Naive thymus-derived CD4-positive, alpha-beta T cell (primary cell): ENCODE measurements at regions of chr18 and their contacts with region 1.

Region 1: GRCh38 chr18:9102508-9103375 is at the start of gene NDUFV2:
- DNase-seq: peak; percentile 93 to 99 (median 97)
- ATAC-seq: peak; percentile 97
- H3K4me3 ChIP-seq: peak within 1 kb of the TSS; percentile 81
- H3K4me3 Mint-ChIP-seq: peak within 1 kb of the TSS; percentile 79 to 98 (median 96)
- H3K27ac ChIP-seq: peak within 1 kb of the TSS; percentile 82
- H3K27ac Mint-ChIP-seq: peak within 1 kb of the TSS; percentile 90 to 98 (median 95)
- H3K4me1 ChIP-seq: peaks cover 40 to 48% of the 10 kb centered on the region in 2 donors
- H3K4me1 Mint-ChIP-seq: peaks cover 46 to 61% (median 57%) of the 10 kb centered on the region in 7 donors
- H3K27me3 ChIP-seq: no peaks in the 10 kb centered on the region
- H3K27me3 Mint-ChIP-seq: no peaks in the 10 kb centered on the region
- total RNA-seq, gene NDUFV2: 127 to 198 (median 171) TPM

Region 2: DNA sequence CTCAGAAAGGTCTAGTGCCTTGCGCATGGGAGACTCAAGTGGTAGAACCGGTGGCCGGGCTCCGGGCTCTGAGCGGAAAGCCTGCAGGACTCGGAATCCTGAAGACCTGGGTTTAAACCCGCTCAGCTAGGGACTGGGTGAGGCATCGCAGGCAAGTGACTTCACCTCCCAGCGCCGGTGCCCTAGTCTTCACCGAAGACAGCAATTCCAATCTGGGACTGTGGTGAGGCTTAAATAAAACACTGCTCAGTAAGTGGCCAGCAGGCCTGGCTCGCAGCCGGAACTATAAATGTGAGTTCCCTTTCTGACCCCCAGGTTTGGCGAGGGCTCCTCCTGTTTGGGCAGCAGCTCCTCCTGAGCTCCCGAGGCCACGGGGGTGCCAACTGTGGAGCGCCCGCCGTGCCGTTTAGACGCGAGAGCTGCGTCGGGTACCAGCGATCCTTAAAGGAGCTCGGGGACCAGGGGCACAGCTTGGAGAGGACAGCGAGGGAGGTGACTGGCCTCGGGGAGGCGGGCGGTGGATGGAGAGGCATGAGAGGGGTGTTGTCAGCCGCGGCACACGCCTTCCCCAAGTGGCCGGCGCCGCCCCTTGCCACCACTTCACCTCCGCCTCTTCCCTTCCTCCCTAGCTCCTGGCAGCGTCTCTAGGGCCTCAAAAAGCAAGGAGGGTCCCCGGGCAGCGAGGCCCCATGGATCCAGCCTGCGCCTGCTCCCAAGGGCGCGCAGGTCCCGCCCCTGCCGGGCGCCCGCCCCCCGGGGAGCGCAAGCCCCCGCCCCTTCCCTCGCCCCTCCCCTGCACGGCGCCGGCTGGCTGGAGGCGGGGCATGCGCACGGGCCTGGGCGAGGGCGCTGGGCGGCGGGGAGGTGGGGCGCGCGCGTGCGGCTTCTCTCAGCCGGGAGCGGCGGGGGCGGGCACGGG is 398.1 kb before region 1 on chr18:
- CTCF ChIA-PET with region 1: no interaction called
- POLR2A ChIA-PET with region 1: no interaction called
- intact Hi-C with region 1: loop called in 1 of 2 experiments (anchors 2 kb)
- DNase-seq: peak; percentile 65 to 92 (median 75)
- ATAC-seq: peak; percentile 96
- H3K4me3 ChIP-seq: peak overlapping the region; percentile 75
- H3K4me3 Mint-ChIP-seq: peak overlapping the region; percentile 83 to 96 (median 90)
- H3K27ac ChIP-seq: peak overlapping the region; percentile 25
- H3K27ac Mint-ChIP-seq: peak overlapping the region in 4 of 9 donors; percentile 4 to 67 (median 48)
- H3K4me1 ChIP-seq: peaks cover 6 to 21% of the 10 kb centered on the region in 2 donors
- H3K4me1 Mint-ChIP-seq: peaks cover 13 to 29% (median 17%) of the 10 kb centered on the region in 7 donors
- H3K27me3 ChIP-seq: peaks cover 5 to 19% of the 10 kb centered on the region in 2 donors
- H3K27me3 Mint-ChIP-seq: peaks cover 60 to 78% (median 68%) of the 10 kb centered on the region in 5 donors

Region 3: DNA sequence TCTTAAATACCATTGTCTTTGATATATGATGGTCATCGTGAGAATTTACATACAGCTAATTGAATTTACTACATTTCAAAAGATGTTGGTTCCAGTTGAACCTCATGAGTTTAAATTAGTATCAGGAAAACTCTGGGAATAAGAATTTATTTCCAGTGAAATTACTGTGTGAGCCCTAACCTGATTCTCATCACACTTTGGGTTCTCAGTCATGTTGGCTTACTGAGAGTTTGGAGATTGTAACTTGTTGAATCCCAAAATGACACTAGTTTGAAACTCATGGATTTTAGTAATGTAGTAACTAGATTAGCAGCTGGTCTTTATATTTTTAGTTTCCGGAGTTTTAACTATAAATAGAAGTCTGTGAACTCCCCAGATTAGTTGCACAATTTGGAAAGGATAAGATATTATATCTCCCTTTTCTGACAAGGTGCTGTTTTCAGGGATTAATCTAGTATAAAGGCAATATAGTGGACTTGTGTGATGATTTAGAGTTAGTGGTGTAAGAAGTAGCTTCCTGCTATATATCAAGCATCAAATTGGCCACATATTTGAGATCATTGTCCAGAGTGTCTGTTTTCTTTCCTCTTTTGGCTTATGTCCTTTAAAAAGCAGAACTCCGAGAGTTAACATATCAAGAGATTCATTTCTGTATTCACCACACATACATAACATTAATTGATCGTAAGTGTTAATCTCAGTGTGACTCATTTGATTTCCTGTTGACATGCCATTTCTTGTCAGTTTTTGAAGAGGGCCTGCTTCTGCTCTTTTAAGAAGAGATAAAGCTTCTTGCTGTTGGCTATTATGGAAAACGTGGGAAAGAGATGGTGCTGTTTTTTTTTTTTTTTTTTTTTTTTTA is 15.5 kb after region 1 on chr18:
- CTCF ChIA-PET with region 1: interaction called, 27 read pairs
- POLR2A ChIA-PET with region 1: interaction called, 160 read pairs
- intact Hi-C with region 1: loop called (anchors 1 kb)
- DNase-seq: peak in 7 of 9 donors; percentile 28 to 66 (median 43)
- ATAC-seq: peak; percentile 72
- H3K4me3 ChIP-seq: peak overlapping the region; percentile 32
- H3K4me3 Mint-ChIP-seq: peak overlapping the region; percentile 56 to 97 (median 82)
- H3K27ac ChIP-seq: peak overlapping the region; percentile 77
- H3K27ac Mint-ChIP-seq: peak overlapping the region; percentile 92 to 98 (median 96)
- H3K4me1 ChIP-seq: peaks cover 52 to 70% of the 10 kb centered on the region in 2 donors
- H3K4me1 Mint-ChIP-seq: peaks cover 51 to 95% (median 87%) of the 10 kb centered on the region in 7 donors
- H3K27me3 ChIP-seq: no peaks in the 10 kb centered on the region
- H3K27me3 Mint-ChIP-seq: no peaks in the 10 kb centered on the region

Region 4: GRCh38 chr18:9136315-9137155 is 33.8 kb after region 1 on chr18 and contains the start of gene ANKRD12:
- CTCF ChIA-PET with region 1: interaction called, 20 read pairs
- POLR2A ChIA-PET with region 1: interaction called, 472 read pairs
- intact Hi-C with region 1: loop called (anchors 1 kb)
- DNase-seq: peak; percentile 93 to 98 (median 96)
- ATAC-seq: peak; percentile 89
- H3K4me3 ChIP-seq: peak within 1 kb of the TSS; percentile 86
- H3K4me3 Mint-ChIP-seq: peak within 1 kb of the TSS; percentile 95 to 99 (median 98)
- H3K27ac ChIP-seq: peak within 1 kb of the TSS; percentile 88
- H3K27ac Mint-ChIP-seq: peak within 1 kb of the TSS; percentile 95 to 99 (median 98)
- H3K4me1 ChIP-seq: peaks cover 42 to 50% of the 10 kb centered on the region in 2 donors
- H3K4me1 Mint-ChIP-seq: peaks cover 45 to 75% (median 69%) of the 10 kb centered on the region in 7 donors
- H3K27me3 ChIP-seq: no peaks in the 10 kb centered on the region
- H3K27me3 Mint-ChIP-seq: no peaks in the 10 kb centered on the region
- total RNA-seq, gene ANKRD12: 98.9 to 274 (median 204) TPM

Region 5: GRCh38 chr18:9334329-9334972 is 231.7 kb after region 1 on chr18 and contains the start of gene TWSG1:
- CTCF ChIA-PET with region 1: no interaction called
- POLR2A ChIA-PET with region 1: interaction called, 10 read pairs
- intact Hi-C with region 1: loop called (anchors 1 kb)
- DNase-seq: peak; percentile 86 to 94 (median 90)
- ATAC-seq: peak; percentile 94
- H3K4me3 ChIP-seq: peak within 1 kb of the TSS; percentile 90
- H3K4me3 Mint-ChIP-seq: peak within 1 kb of the TSS; percentile 86 to 94 (median 92)
- H3K27ac ChIP-seq: peak within 1 kb of the TSS; percentile 74
- H3K27ac Mint-ChIP-seq: peak within 1 kb of the TSS; percentile 63 to 97 (median 88)
- H3K4me1 ChIP-seq: peaks cover 0 to 8% of the 10 kb centered on the region in 2 donors
- H3K4me1 Mint-ChIP-seq: peaks cover 1 to 33% (median 24%) of the 10 kb centered on the region in 7 donors
- H3K27me3 ChIP-seq: no peaks in the 10 kb centered on the region
- H3K27me3 Mint-ChIP-seq: peaks cover 0 to 35% (median 0%) of the 10 kb centered on the region in 5 donors
- total RNA-seq, gene TWSG1: 2.4 to 7.6 (median 5.8) TPM

Region 6: GRCh38 chr18:9516437-9517064 is 413.8 kb after region 1 on chr18:
- CTCF ChIA-PET with region 1: interaction called, 11 read pairs
- POLR2A ChIA-PET with region 1: no interaction called
- intact Hi-C with region 1: loop called in 1 of 2 experiments (anchors 1 kb)
- DNase-seq: peak in 6 of 9 donors; percentile 11 to 57 (median 48)
- ATAC-seq: peak; percentile 80
- H3K4me3 ChIP-seq: no peak overlapping the region
- H3K4me3 Mint-ChIP-seq: no peak overlapping the region
- H3K27ac ChIP-seq: no peak overlapping the region
- H3K27ac Mint-ChIP-seq: peak overlapping the region in 1 of 9 donors; percentile 31
- H3K4me1 ChIP-seq: no peaks in the 10 kb centered on the region
- H3K4me1 Mint-ChIP-seq: peaks cover 0 to 14% (median 6%) of the 10 kb centered on the region in 7 donors
- H3K27me3 ChIP-seq: no peaks in the 10 kb centered on the region
- H3K27me3 Mint-ChIP-seq: no peaks in the 10 kb centered on the region